ENCODE measurements at regions of chr1 and their contacts with region 1.

Region 1: GRCh38 chr1:44674113-44675000 is at the starts of genes ARMH1 and TMEM53:
- DNase-seq: peak; percentile 98 to 99 (median 99)
- H3K4me3 ChIP-seq: peak within 1 kb of the TSS; percentile 50 to 79 (median 71)
- H3K4me3 Mint-ChIP-seq: peak within 1 kb of the TSS; percentile 84 to 91
- H3K27ac ChIP-seq: peak within 1 kb of the TSS; percentile 84 to 87
- H3K27ac Mint-ChIP-seq: peak within 1 kb of the TSS in 4 of 7 donors; percentile 91 to 96 (median 94)
- H3K4me1 ChIP-seq: peaks cover 77 to 80% of the 10 kb centered on the region in 2 donors
- H3K4me1 Mint-ChIP-seq: peaks cover 43% of the 10 kb centered on the region
- H3K27me3 ChIP-seq: no peaks in the 10 kb centered on the region
- H3K27me3 Mint-ChIP-seq: peaks cover 0 to 5% (median 2%) of the 10 kb centered on the region in 3 donors
- CTCF ChIP-seq: no peak
- polyA plus RNA-seq, gene ARMH1: 14.7 to 209 (median 15.8) TPM
- polyA plus RNA-seq, gene TMEM53: 4.8 to 8.8 (median 8.6) TPM

Region 2: GRCh38 chr1:44511769-44512168 is 162.6 kb before region 1 on chr1:
- intact Hi-C with region 1: no loop called
- DNase-seq: no peak
- H3K4me3 ChIP-seq: no peak overlapping the region
- H3K4me3 Mint-ChIP-seq: no peak overlapping the region
- H3K27ac ChIP-seq: no peak overlapping the region
- H3K27ac Mint-ChIP-seq: no peak overlapping the region
- H3K4me1 ChIP-seq: peaks cover 8 to 10% of the 10 kb centered on the region in 2 donors
- H3K4me1 Mint-ChIP-seq: peaks cover 25% of the 10 kb centered on the region
- H3K27me3 ChIP-seq: no peaks in the 10 kb centered on the region
- H3K27me3 Mint-ChIP-seq: peaks cover 0 to 7% (median 0%) of the 10 kb centered on the region in 3 donors
- CTCF ChIP-seq: no peak

Region 3: DNA sequence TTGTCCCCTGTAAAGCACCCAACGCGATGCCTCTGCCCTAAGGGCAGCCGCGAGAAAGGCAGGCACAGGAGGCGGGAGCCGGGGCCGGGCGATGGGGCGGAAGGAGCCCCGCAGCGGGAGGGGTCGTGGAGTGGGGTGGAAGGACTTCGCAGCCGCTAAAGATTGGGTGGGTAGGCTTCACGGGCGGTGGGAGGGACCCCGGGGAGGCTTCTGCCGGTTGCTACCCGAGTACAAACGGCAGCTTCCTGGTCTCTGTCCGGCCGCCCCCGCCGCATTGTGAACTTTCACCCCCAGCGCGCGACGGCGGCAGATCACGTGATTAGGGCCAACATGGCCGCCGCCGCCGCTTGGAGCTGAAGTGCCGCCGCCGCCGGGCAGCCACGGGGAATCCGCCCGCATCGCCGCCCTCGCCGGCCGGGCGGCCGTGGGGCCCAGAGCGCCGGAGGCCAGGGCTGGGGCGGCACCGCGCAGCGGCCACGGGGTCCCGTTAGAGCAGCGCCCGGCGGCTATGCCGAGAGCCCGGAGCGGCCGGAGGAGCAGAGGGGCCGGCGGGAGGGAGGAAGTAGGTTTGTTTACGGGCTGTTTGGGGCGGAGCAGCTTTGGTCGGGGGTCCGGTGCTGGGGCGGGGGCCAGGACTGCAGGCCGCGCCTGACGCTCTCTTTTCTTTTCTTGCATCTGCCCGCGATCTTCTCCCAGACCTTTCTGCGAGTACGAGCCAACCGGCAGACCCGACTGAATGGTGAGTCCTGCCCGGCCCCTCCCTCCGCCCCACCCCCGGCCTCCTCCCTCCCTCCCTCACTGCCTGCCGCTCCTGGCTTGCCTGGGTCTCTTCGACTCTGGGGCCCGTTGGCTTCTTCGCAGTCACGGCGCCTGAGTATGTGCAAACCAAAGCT is 42.5 kb before region 1 on chr1:
- intact Hi-C with region 1: loop called in 1 of 2 experiments (anchors 5 kb)
- DNase-seq: peak; percentile 84
- H3K4me3 ChIP-seq: peak overlapping the region; percentile 68 to 97 (median 85)
- H3K4me3 Mint-ChIP-seq: peak overlapping the region; percentile 91 to 93
- H3K27ac ChIP-seq: peak overlapping the region; percentile 87 to 97
- H3K27ac Mint-ChIP-seq: peak overlapping the region; percentile 91 to 99 (median 97)
- H3K4me1 ChIP-seq: peaks cover 22 to 32% of the 10 kb centered on the region in 2 donors
- H3K4me1 Mint-ChIP-seq: peaks cover 31% of the 10 kb centered on the region
- H3K27me3 ChIP-seq: no peaks in the 10 kb centered on the region
- H3K27me3 Mint-ChIP-seq: no peaks in the 10 kb centered on the region
- CTCF ChIP-seq: no peak

Region 4: DNA sequence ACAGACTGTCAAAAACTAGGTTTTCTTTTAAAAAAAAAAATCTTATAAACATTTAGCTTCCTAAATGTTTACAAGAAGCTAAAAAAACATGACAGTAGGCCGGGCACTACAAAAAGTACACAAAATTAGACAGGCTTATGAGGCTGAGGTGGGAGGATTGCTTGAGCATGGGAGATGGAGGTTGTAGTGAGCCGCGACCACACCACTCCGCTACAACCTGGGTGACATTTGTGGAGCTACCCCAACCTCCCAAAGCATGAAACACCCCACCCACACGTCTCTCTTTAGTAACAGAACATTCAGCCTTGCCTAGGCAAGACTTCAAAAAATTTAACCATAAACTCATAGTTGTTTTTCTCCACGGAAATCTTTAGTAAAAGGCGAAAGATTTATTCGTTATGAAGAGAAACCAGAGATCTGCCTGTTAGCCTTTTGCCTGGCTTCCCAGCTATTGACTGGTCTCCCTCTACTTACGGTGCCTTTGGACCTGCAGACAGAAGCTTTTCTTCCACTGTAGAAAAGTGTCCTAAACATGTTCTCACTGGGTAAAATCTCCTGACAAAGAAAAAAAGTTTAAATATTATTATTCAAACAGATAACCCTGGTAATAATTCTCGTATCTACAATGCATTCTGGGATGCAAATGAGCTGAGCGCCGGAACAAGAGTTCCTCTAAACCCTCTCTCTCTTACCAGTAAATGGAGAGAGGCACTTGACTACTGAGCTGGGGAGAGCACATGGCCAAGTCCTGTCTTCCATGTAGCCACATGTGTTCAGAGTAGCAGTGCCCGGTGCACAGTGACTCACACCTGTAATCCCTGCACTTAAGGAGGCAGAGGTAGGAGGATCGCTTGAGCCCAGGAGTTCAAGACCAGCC is 47.4 kb after region 1 on chr1:
- intact Hi-C with region 1: loop called in 1 of 2 experiments (anchors 10 kb)
- DNase-seq: peak; percentile 89 to 95 (median 91)
- H3K4me3 ChIP-seq: peak overlapping the region in 1 of 3 experiments; percentile 38
- H3K4me3 Mint-ChIP-seq: peak overlapping the region; percentile 1 to 71
- H3K27ac ChIP-seq: peak overlapping the region; percentile 55 to 89
- H3K27ac Mint-ChIP-seq: peak overlapping the region; percentile 92 to 98 (median 96)
- H3K4me1 ChIP-seq: peaks cover 42 to 56% of the 10 kb centered on the region in 2 donors
- H3K4me1 Mint-ChIP-seq: peaks cover 55% of the 10 kb centered on the region
- H3K27me3 ChIP-seq: no peaks in the 10 kb centered on the region
- H3K27me3 Mint-ChIP-seq: peaks cover 2 to 8% (median 4%) of the 10 kb centered on the region in 3 donors
- CTCF ChIP-seq: no peak

Measured in CD14-positive monocyte (primary cell).